Cardiac septum (tissue), 1 donor: ENCODE measurements at regions of chr5 and their contacts with region 1.

Region 1: GRCh38 chr5:150946351-150946905 is 41.6 kb upstream of the ZNF300 start:
- DNase-seq: peak; percentile 93

Region 2: DNA sequence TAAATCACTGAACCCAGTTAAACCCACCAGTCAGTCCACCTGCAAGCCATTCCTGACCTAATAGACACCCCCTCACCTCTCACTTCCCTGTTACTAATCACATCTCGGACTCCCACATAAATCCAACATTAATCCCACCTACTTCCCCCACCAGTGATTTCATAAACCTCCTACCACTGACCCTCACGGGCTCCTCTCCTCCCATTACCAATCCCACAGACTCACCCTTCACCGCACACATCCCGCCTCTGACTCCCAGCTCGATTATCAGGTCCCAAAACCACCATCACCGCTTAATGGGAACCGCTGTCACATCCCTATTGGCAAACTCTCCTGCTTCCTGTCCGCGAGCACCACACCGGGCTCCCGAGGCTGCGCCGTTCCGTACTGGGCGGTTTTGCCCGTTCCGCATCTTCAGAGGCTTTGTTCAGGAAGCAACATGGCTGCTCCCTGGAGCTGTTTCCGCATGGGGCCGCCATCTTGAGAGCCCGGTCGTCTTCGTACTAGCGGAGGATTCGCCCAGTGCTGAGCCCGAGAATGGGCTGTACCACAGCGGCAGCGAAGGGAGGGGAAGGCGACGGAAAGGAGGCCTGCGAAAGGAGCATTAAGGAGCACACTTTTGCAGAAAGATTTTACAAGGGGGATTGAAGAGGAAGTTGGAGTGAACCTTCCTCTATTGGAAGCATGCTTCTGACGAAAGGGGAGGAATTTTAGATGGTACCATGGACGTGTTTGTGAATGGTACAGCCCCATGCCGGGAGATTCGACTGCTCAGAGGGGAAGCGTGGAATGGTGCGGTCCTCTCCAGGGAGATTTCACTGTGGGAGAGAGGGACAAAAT is 41.7 kb before region 1 on chr5 and contains the start of gene ZNF300:
- intact Hi-C with region 1: loop called (anchors 2 kb)
- DNase-seq: peak; percentile 90
- total RNA-seq, gene ZNF300: 1.5 TPM

Region 3: DNA sequence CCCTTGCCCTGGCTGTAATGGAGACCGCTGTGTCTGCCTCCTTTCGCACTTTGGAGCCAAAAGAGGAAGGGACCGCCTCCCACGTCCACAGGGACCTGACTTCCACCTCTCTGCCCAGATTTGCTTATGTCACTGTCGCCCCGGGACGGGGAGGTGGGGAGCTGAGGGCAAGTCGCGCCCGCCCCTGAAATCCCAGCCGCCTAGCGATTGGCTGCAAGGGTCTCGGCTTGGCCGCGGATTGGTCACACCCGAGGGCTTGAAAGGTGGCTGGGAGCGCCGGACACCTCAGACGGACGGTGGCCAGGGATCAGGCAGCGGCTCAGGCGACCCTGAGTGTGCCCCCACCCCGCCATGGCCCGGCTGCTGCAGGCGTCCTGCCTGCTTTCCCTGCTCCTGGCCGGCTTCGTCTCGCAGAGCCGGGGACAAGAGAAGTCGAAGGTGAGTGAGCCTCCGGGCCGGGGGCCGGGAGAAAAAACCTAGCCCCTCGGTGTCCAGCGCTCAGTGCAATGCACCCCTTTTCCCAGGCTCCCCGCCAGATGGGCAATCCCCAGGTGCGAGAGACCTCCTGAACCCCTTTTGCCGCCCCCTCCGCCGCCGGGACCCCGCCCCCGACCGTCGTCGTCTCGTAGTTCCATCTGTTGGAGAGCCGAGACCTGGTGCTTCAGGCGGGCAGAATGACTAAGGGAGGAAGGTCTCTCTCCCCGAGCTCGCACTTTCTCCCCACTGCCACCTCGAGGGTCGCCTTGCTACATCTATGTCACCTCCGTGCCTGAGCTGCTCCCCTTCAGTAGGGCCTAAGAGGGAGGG is 74.1 kb after region 1 on chr5 and contains the start of gene GPX3:
- intact Hi-C with region 1: loop called (anchors 1 kb)
- DNase-seq: peak; percentile 97
- total RNA-seq, gene GPX3: 461 TPM